ENCODE measurements at regions of chr6 and their contacts with region 1.

Region 1: DNA sequence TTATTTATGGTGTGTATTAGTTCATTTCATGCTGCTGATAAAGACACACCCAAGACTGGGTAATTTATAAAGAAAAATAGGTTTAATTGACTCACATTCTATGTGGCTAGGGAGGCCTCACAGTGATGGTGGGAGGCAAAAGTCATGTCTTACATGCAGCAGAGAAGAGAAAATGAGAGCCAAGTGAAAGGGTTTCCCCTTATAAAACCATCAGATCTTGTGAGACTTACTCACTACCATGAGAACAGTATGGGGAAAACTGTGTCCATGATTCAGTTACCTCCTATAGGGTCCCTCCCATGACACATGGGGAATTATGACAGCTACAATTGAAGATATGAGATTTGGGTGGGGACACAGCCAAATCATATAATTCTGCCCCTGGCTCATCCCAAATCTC is 150.0 kb upstream of the AHI1 start:
- DNase-seq: no peak
- H3K4me3 Mint-ChIP-seq: peak overlapping the region; percentile 86
- H3K27ac Mint-ChIP-seq: peak overlapping the region; percentile 98
- H3K4me1 Mint-ChIP-seq: peaks cover 52% of the 10 kb centered on the region
- H3K27me3 Mint-ChIP-seq: no peaks in the 10 kb centered on the region

Region 2: GRCh38 chr6:135497412-135498269 is 149.9 kb before region 1 on chr6 and contains the start of gene AHI1:
- intact Hi-C with region 1: loop called (anchors 5 kb)
- DNase-seq: peak; percentile 97
- H3K4me3 Mint-ChIP-seq: no peak within 1 kb of the TSS
- H3K27ac Mint-ChIP-seq: no peak within 1 kb of the TSS
- H3K4me1 Mint-ChIP-seq: peaks cover 18% of the 10 kb centered on the region
- H3K27me3 Mint-ChIP-seq: no peaks in the 10 kb centered on the region
- total RNA-seq, gene AHI1: 155 and 160 TPM in 2 replicates

Region 3: GRCh38 chr6:135577059-135577538 is 70.4 kb before region 1 on chr6:
- intact Hi-C with region 1: loop called (anchors 2 kb)
- DNase-seq: peak; percentile 74
- H3K4me3 Mint-ChIP-seq: peak overlapping the region; percentile 39
- H3K27ac Mint-ChIP-seq: peak overlapping the region; percentile 96
- H3K4me1 Mint-ChIP-seq: peaks cover 45% of the 10 kb centered on the region
- H3K27me3 Mint-ChIP-seq: no peaks in the 10 kb centered on the region

Region 4: DNA sequence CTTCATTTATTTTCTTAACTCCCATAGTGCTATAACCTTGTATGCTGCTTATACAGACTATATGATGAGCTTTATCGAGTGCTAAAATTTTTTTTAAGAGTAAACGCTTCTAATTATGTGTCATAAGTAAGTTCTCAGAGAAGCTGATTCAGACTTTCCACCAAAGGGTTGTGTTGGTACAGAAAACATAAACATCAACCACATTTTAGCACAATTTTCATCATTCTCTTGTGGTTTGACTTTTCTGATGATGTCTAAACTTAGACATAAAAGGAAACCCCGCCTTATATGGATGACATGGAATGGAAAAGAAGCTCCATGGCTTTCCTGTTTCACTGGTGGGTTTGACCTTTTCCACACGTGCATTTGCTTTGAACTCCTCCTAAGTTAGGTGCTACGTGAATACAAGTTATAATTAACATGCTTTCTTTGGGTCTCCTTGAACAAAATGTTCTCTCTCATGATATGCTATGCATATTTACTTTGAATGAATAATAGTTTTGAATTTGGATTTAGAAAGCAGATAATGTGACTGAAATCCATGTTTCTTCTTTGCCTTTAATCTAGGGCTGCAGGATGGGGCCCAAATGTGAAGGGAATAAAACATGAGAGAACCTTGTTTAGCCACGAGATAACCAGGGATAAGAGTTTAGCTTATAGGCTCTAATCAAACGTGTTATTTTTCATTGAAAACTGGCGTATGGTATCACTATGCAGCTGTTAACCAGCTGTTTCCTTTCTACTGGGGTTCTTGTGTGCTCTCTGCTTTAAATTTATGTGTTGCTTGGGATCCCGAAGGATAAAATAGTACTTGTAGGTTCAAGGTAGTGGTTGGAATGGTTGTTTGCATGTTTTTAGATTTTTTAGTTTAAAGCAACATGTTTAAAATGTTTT is 22.9 kb before region 1 on chr6:
- intact Hi-C with region 1: loop called (anchors 1 kb)
- DNase-seq: peak; percentile 83
- H3K4me3 Mint-ChIP-seq: peak overlapping the region; percentile 46
- H3K27ac Mint-ChIP-seq: peak overlapping the region; percentile 98
- H3K4me1 Mint-ChIP-seq: peaks cover 61% of the 10 kb centered on the region
- H3K27me3 Mint-ChIP-seq: no peaks in the 10 kb centered on the region

Region 5: DNA sequence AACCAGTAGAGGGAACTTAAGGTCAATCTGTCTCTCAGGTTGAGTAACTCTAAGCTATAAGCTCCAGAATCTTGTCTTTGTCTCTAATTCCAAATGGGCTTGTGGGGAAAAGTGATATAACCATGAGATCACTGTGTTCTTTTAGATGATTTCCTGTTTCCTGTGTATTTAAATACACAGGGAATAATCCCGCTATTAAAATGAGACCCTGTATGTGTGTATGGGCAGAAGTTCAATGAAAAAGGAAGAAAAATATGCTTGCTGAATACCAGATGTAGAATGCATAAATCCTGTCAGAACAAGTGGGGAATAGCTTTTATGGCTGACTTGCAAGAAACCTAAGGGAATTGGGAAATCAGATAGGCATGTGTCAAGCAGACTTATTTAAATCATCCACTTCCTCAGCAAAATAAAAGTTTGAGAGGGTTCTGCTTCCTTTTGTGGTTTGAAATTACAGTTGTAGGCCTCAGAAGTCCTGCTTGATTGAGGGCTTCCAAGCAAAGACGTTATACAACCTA is 39.3 kb after region 1 on chr6:
- intact Hi-C with region 1: no loop called
- DNase-seq: no peak
- H3K4me3 Mint-ChIP-seq: no peak overlapping the region
- H3K27ac Mint-ChIP-seq: no peak overlapping the region
- H3K4me1 Mint-ChIP-seq: peaks cover 13% of the 10 kb centered on the region
- H3K27me3 Mint-ChIP-seq: no peaks in the 10 kb centered on the region

Region 6: GRCh38 chr6:135801755-135802465 is 154.4 kb after region 1 on chr6:
- intact Hi-C with region 1: no loop called
- DNase-seq: no peak
- H3K4me3 Mint-ChIP-seq: no peak overlapping the region
- H3K27ac Mint-ChIP-seq: no peak overlapping the region
- H3K4me1 Mint-ChIP-seq: peaks cover 4% of the 10 kb centered on the region
- H3K27me3 Mint-ChIP-seq: no peaks in the 10 kb centered on the region

Region 7: GRCh38 chr6:135851442-135852271 is 204.1 kb after region 1 on chr6 and contains the start of gene PDE7B:
- intact Hi-C with region 1: loop called (anchors 2 kb)
- DNase-seq: peak; percentile 91
- H3K4me3 Mint-ChIP-seq: peak within 1 kb of the TSS; percentile 81
- H3K27ac Mint-ChIP-seq: peak within 1 kb of the TSS; percentile 86
- H3K4me1 Mint-ChIP-seq: peaks cover 30% of the 10 kb centered on the region
- H3K27me3 Mint-ChIP-seq: no peaks in the 10 kb centered on the region
- total RNA-seq, gene PDE7B: 15.4 and 16.0 TPM in 2 replicates

Measured in activated CD4-positive, alpha-beta T cell treated with anti-CD3 and anti-CD28 coated beads, Interleukin-2, amount 10 ng/mL, durations not matched to agents 24 days and 14 days (primary cell).